Posterior vena cava (tissue), 2 donors: ENCODE measurements at regions of chr5 and their contacts with region 1.

Region 1: DNA sequence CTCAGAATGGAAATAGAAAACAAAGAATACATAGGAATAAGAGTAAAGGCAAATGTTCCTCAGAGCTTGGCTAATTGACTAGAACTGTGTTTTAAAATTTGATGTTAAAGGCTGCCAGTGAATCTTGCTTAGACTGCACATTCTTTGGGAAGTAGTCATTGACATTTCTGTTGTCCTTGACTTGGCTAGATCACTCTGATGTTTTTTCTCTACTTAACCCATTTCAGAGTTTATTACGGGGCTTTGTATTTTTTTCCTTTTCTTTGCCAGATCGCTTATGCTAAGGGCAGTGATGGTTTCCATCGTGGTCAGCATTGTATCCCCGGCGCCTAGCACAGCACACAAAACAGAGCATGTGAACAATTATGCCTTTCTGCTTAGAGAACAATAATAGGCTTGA is 1126.7 kb upstream of the CDH9 start:
- DNase-seq: no peak

Region 2: GRCh38 chr5:27619982-27620381 is 545.1 kb before region 1 on chr5:
- intact Hi-C with region 1: loop called in 1 of 2 experiments (anchors 5 kb)
- DNase-seq: no peak

Region 3: GRCh38 chr5:28027851-28028250 is 137.2 kb before region 1 on chr5:
- intact Hi-C with region 1: no loop called
- DNase-seq: no peak